GM10248 (cell line): ENCODE measurements at regions of chr12 and their contacts with region 1.

Region 1: GRCh38 chr12:94875525-94875924 is 128.0 kb downstream of the NDUFA12 start:
- DNase-seq: peak; percentile 71
- CTCF ChIP-seq: peak; percentile 68

Region 2: DNA sequence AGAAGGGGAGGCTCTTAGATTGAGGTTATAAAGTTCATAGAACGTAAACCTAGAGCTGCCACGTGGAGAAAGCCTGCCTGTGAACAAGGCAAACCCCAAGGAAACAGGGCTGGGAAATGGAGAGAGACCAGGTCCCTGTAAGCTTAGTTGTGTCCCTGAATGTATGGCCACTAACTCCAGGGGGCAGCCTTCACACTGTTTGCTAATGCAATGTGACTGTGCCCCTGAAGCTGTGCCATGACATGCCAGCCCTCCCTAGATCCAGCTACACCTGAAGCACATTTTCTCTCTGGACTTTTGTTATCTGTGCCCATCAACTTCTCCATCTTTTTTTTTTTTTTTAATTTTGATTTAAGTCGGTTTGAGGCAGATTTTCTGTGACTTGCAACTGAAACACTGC is 164.6 kb before region 1 on chr12:
- CTCF ChIA-PET with region 1: interaction called, 13 read pairs
- POLR2A ChIA-PET with region 1: no interaction called
- DNase-seq: peak; percentile 34
- CTCF ChIP-seq: no peak

Region 3: GRCh38 chr12:94771199-94771598 is 104.3 kb before region 1 on chr12:
- CTCF ChIA-PET with region 1: interaction called, 10 read pairs
- POLR2A ChIA-PET with region 1: no interaction called
- DNase-seq: no peak
- CTCF ChIP-seq: no peak

Region 4: DNA sequence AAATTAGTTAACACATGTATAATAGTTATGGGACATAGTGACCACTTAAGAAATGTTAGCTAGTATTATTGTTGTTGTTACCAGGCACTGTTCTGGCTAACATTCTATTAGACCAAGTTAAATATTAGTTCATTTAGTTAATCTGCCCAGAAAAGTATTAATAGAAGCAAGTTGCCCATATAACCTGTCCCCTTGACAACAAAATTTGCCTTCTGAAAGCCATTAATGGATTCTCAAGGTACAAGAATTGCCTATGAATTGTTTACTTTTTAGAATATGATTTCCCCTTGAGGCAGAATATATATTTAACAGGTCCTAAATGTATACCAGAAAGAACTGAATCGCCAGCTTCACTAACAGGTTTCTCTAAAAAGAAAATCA is 57.8 kb before region 1 on chr12:
- CTCF ChIA-PET with region 1: interaction called, 18 read pairs
- POLR2A ChIA-PET with region 1: no interaction called
- DNase-seq: no peak
- CTCF ChIP-seq: no peak

Region 5: GRCh38 chr12:94889445-94890210 is 14.1 kb after region 1 on chr12:
- CTCF ChIA-PET with region 1: interaction called, 19 read pairs
- POLR2A ChIA-PET with region 1: no interaction called
- DNase-seq: no peak
- CTCF ChIP-seq: no peak